ENCODE measurements at regions of chr7 and their contacts with region 1.

Region 1: GRCh38 chr7:98855610-98856422 is 14.0 kb downstream of the TMEM130 start:
- DNase-seq: no peak
- ATAC-seq: peak; percentile 49
- H3K4me3 Mint-ChIP-seq: no peak overlapping the region
- H3K27ac Mint-ChIP-seq: no peak overlapping the region
- H3K4me1 Mint-ChIP-seq: no peaks in the 10 kb centered on the region
- H3K27me3 Mint-ChIP-seq: peaks cover 8% of the 10 kb centered on the region

Region 2: GRCh38 chr7:98810153-98810802 is 45.5 kb before region 1 on chr7:
- CTCF ChIA-PET with region 1: no interaction called
- POLR2A ChIA-PET with region 1: no interaction called
- intact Hi-C with region 1: loop called in 1 of 2 experiments (anchors 2 kb)
- DNase-seq: no peak
- ATAC-seq: no peak
- H3K4me3 Mint-ChIP-seq: no peak overlapping the region
- H3K27ac Mint-ChIP-seq: no peak overlapping the region
- H3K4me1 Mint-ChIP-seq: no peaks in the 10 kb centered on the region
- H3K27me3 Mint-ChIP-seq: peaks cover 2% of the 10 kb centered on the region

Region 3: GRCh38 chr7:98956937-98957336 is 101.1 kb after region 1 on chr7:
- CTCF ChIA-PET with region 1: no interaction called
- POLR2A ChIA-PET with region 1: no interaction called
- intact Hi-C with region 1: no loop called
- DNase-seq: no peak
- ATAC-seq: no peak
- H3K4me3 Mint-ChIP-seq: no peak overlapping the region
- H3K27ac Mint-ChIP-seq: no peak overlapping the region
- H3K4me1 Mint-ChIP-seq: no peaks in the 10 kb centered on the region
- H3K27me3 Mint-ChIP-seq: no peaks in the 10 kb centered on the region

Measured in activated CD4-positive, alpha-beta T cell treated with anti-CD3 and anti-CD28 coated beads for 36 hours (primary cell).